Dorsolateral prefrontal cortex (tissue), 120 donors: ENCODE measurements at regions of chr2 and their contacts with region 1.

Region 1: DNA sequence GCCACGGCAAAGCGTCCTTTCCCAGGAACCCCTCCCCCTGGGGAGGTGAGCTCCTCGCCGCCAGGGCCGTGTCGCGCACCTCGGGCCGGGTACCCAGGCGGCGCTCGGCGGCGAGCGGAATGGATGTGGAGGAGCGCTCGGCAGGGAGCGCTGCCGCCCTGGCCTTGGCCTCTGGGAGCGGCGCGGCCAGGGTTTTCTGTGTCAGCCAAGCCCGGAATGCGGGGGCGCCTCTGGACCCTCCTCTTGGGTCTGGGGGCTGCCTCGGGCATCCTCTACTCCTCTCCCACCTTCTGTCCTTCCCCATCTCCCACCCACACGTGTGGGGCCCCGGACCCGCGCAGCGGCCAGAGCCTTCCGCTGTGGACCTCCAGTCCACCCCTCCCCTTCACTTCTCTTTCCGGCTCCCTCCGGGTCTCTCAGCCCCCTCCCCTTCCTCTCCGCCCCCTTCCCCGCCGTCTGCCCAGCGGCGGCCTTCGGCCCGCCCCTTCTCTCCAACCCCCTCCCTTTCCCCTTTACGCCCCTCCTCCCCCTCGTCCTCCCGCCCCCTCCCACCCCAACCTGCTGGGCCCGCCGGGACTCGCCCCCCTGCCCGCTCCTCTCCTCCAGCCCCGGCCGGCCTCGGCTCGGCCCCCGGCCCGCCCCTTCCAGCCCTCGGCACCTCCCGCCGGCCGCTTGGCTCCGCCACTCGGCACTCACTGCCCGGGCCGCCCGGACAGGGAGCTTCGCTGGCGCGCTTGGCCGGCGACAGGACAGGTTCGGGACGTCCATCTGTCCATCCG is at the start of gene MERTK:
- DNase-seq: peak in 8 of 10 donors; percentile 21 to 79 (median 57)
- H3K4me3 ChIP-seq: peak within 1 kb of the TSS; percentile 53 to 89 (median 77)
- H3K27ac ChIP-seq: peak within 1 kb of the TSS; percentile 31 to 96 (median 89)
- H3K27me3 ChIP-seq: peaks cover 0 to 3% (median 0%) of the 10 kb centered on the region in 45 donors
- CTCF ChIP-seq: peak; percentile 27 to 79 (median 60)
- total RNA-seq, gene MERTK: 9.8 to 72.4 (median 25.3) TPM

Region 2: DNA sequence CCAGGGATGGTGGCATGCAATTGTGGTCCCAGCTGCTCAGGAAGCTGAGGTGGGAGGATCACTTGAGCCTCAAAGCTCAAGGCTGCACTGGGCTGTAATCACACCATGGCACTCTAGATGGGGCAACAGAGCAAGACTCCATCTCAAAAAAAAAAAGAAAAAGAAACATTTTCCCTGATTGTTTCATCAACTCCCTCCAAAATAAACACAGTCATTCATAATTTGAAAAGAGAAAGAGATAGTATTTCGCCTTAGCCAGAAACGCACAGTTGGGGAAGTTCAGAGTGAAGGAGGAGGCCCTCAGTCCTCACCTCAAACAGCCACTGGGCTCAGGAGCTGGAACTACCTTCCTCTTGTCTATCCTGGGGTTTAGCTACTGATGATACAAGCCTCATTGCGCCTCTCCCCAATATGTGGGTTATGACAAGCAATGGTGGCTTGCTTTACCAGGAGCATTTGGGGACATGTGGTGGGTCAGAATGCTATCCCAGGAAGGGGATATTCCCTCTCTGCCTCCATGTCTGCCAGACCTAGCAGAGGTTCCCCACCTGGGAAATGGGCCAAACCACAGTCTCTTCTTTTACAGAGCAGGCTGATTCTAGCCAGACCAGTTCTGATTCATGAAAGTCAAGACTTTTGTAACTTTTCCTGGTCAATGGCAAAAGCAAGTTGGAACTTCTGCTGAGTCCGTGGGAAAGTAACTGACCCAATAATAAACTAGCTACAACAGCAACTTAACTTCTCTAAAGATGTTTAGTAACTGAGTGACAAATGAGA is 134.8 kb after region 1 on chr2:
- intact Hi-C with region 1: loop called in 1 of 2 experiments (anchors 5 kb)
- DNase-seq: peak in 1 of 10 donors; percentile 45
- H3K4me3 ChIP-seq: no peak overlapping the region
- H3K27ac ChIP-seq: peak overlapping the region in 26 of 59 donors; percentile 4 to 73 (median 41)
- H3K27me3 ChIP-seq: no peaks in the 10 kb centered on the region
- CTCF ChIP-seq: peak in 2 of 56 donors; percentile 8 to 9

Region 3: GRCh38 chr2:112048887-112049286 is 150.8 kb after region 1 on chr2:
- intact Hi-C with region 1: loop called (anchors 5 kb)
- DNase-seq: peak in 1 of 10 donors; percentile 17
- H3K4me3 ChIP-seq: peak overlapping the region in 1 of 59 donors; percentile 2
- H3K27ac ChIP-seq: peak overlapping the region in 1 of 59 donors; percentile 36
- H3K27me3 ChIP-seq: no peaks in the 10 kb centered on the region
- CTCF ChIP-seq: peak; percentile 78 to 100 (median 90)